ENCODE measurements at regions of chr22 and their contacts with region 1.

Region 1: GRCh38 chr22:30253205-30253852 is 6.8 kb upstream of the LIF start:
- DNase-seq: peak in 7 of 10 donors; percentile 39 to 94 (median 58)

Region 2: GRCh38 chr22:30104501-30105156 is 148.7 kb before region 1 on chr22:
- intact Hi-C with region 1: loop called (anchors 1 kb)
- DNase-seq: no peak